ENCODE measurements at regions of chr20 and their contacts with region 1.

Region 1: GRCh38 chr20:37979021-37979985 is 54.0 kb downstream of the TTI1 start:
- DNase-seq: no peak
- ATAC-seq: no peak
- H3K4me3 ChIP-seq: no peak overlapping the region
- H3K27ac ChIP-seq: no peak overlapping the region
- H3K4me1 ChIP-seq: no peaks in the 10 kb centered on the region
- H3K27me3 ChIP-seq: no peaks in the 10 kb centered on the region
- CTCF ChIP-seq: no peak

Region 2: DNA sequence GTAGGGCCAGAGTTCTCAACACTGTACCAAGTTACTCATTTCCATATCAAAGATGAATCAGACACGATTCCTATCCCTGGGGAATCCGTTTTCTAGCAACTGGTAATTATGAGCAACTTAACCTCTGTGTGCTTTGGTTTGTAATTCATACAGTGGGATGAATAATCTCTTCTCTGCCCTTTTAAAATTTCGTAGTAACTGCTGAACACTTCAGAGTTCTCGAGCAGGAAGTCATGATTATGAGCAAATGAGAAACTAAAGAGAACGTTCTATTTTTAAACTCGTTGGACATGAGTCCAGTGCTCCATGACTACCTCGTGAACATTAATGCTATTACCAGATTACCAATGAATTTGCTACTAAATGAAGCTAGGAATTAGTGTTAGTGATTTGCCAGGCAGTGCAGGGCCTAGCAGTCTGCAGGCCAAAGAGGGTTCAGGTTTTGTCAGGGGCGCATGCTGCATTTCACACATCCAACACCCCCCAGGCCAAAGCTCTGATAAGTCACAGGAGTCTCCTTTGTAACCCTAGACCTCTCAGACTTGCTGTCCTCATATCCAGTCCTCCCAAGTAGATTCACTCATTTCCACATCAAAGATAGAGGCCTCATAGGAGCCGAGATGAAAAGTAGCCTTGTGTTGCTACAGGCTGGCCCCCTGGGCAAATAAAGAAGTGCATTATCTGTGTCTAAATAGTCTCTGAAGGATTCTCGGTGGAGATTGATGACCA is 122.2 kb before region 1 on chr20:
- CTCF ChIA-PET with region 1: no interaction called
- POLR2A ChIA-PET with region 1: interaction called, 11 read pairs
- intact Hi-C with region 1: no loop called
- DNase-seq: peak; percentile 43
- ATAC-seq: peak; percentile 61
- H3K4me3 ChIP-seq: no peak overlapping the region
- H3K27ac ChIP-seq: peak overlapping the region; percentile 52
- H3K4me1 ChIP-seq: no peaks in the 10 kb centered on the region
- H3K27me3 ChIP-seq: no peaks in the 10 kb centered on the region
- CTCF ChIP-seq: no peak